ENCODE measurements at regions of chr15 and their contacts with region 1.

Region 1: GRCh38 chr15:82540055-82540983 is at the start of gene RPS17:
- DNase-seq: peak; percentile 100
- ATAC-seq: peak; percentile 95
- H3K4me3 Mint-ChIP-seq: peak within 1 kb of the TSS; percentile 96
- H3K27ac Mint-ChIP-seq: peak within 1 kb of the TSS; percentile 97
- H3K4me1 Mint-ChIP-seq: peaks cover 28% of the 10 kb centered on the region
- H3K27me3 Mint-ChIP-seq: no peaks in the 10 kb centered on the region
- total RNA-seq, gene RPS17: 1,491 to 1,514 TPM

Region 2: DNA sequence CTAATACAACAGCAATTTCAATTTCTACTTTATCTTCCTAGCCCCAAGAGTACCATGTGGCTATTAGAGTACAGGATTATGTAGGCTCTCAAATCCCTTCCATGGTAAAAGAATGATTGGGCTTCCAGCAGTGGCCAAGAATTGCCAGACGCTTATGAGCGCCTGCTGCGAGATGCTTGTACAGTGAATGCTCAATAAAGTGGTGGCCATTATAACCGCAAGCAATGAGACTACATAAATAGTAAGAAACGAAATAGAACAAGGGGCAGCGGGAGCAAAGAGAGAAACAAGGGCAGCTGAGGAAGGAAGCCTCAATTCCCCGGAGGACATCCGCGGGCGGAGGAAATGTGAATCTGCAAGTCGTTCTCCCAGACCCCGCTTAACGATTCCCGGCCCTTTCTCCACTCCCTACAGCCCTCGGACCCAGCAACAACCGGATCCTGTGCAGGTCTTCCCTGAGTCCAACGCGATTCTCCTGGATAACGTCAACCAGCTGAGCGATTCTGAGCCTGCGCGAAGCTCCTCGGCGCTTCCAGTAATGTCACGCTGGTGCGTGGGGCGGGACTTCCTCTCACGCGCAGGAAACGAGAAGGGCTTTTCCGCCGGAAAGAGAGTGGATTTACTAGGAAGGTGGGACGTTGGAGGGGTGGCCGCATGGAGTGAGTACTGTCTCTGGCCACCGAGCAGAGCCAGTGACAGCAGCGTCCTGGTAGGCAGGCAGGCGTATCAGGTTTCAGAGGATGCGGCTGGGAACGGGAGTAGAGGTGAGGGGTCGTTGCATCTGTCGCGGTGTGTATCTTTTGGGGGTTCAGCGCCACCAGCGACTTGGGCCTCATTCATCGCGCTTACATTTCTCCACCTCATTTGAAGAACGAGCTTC is 209.9 kb after region 1 on chr15:
- POLR2A ChIA-PET with region 1: interaction called, 15 read pairs
- DNase-seq: peak; percentile 79
- ATAC-seq: peak; percentile 92
- H3K4me3 Mint-ChIP-seq: peak overlapping the region; percentile 99
- H3K27ac Mint-ChIP-seq: peak overlapping the region; percentile 95
- H3K4me1 Mint-ChIP-seq: peaks cover 25% of the 10 kb centered on the region
- H3K27me3 Mint-ChIP-seq: no peaks in the 10 kb centered on the region

Region 3: DNA sequence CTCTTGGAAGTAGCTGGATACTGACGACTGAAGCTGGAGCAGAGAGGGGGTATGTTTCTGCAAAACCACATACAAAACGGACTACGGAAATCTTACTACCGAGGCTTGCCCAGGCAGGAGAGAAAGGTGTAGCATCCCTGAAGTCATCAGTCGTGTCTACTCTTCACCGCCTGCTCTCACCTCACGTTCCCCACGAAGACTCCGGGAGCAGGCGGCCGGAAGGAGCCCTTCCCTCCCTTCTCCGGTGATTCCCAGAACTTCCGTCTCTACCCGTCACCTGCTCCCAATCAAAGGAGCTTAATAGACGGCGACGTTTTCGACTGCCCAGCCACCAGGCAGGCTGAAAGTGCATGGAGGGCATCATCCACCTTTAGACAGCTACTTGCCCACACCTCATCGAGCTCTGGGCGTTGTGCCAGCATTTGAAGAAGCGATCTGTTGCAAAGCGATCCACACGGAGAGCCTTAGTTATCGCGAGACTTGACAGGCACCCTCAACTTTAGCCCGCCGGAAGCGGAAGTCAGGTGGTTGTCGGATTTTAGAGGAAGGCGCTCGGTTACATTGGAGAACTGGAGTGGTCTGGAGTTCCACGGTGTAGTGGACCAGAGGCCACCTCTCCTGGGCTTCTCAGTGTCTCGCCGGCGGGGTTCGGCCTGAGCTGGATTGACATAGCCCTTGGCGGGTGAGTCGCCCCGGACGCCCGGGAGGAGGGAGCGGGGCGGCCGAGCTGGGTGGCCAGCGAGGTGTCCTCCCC is 445.5 kb after region 1 on chr15 and contains the start of gene RAMAC:
- POLR2A ChIA-PET with region 1: interaction called, 14 read pairs
- DNase-seq: peak; percentile 83
- ATAC-seq: peak; percentile 92
- H3K4me3 Mint-ChIP-seq: peak within 1 kb of the TSS; percentile 90
- H3K27ac Mint-ChIP-seq: peak within 1 kb of the TSS; percentile 98
- H3K4me1 Mint-ChIP-seq: peaks cover 27% of the 10 kb centered on the region
- H3K27me3 Mint-ChIP-seq: no peaks in the 10 kb centered on the region
- total RNA-seq, gene RAMAC: 24.4 to 25.9 TPM